Transverse colon (tissue), 4 donors: ENCODE measurements at regions of chr5 and their contacts with region 1.

Region 1: GRCh38 chr5:98796197-98796972 is 22.9 kb downstream of the RGMB start:
- DNase-seq: peak; percentile 55
- H3K4me3 ChIP-seq: no peak overlapping the region
- H3K27ac ChIP-seq: peak overlapping the region in 2 of 4 donors; percentile 5 to 22
- H3K4me1 ChIP-seq: peaks cover 7 to 43% (median 13%) of the 10 kb centered on the region in 4 donors
- H3K27me3 ChIP-seq: no peaks in the 10 kb centered on the region
- CTCF ChIP-seq: peak; percentile 71 to 82 (median 79)
- EP300 ChIP-seq: no peak
- POLR2A ChIP-seq: no peak

Region 2: GRCh38 chr5:97534166-97534565 is 1262.2 kb before region 1 on chr5:
- in situ Hi-C with region 1: loop called in 1 of 4 experiments (anchors 25 kb)
- intact Hi-C with region 1: no loop called
- DNase-seq: peak; percentile 26
- H3K4me3 ChIP-seq: no peak overlapping the region
- H3K27ac ChIP-seq: no peak overlapping the region
- H3K4me1 ChIP-seq: peaks cover 0 to 7% (median 3%) of the 10 kb centered on the region in 4 donors
- H3K27me3 ChIP-seq: no peaks in the 10 kb centered on the region
- CTCF ChIP-seq: peak; percentile 42 to 58 (median 55)
- EP300 ChIP-seq: no peak
- POLR2A ChIP-seq: no peak